ENCODE measurements at regions of chr1 and their contacts with region 1.

Region 1: GRCh38 chr1:67500413-67500959 is 70.3 kb upstream of the SERBP1 start:
- DNase-seq: peak; percentile 15
- H3K4me3 ChIP-seq: no peak overlapping the region
- H3K27me3 ChIP-seq: peaks cover 7% of the 10 kb centered on the region
- CTCF ChIP-seq: peak; percentile 99

Region 2: GRCh38 chr1:67214420-67215174 is 285.9 kb before region 1 on chr1:
- CTCF ChIA-PET with region 1: interaction called, 69 read pairs
- POLR2A ChIA-PET with region 1: no interaction called
- DNase-seq: no peak
- H3K4me3 ChIP-seq: no peak overlapping the region
- H3K27me3 ChIP-seq: no peaks in the 10 kb centered on the region
- CTCF ChIP-seq: peak; percentile 66

Region 3: GRCh38 chr1:67250051-67250653 is 250.3 kb before region 1 on chr1:
- CTCF ChIA-PET with region 1: no interaction called
- POLR2A ChIA-PET with region 1: no interaction called
- DNase-seq: no peak
- H3K4me3 ChIP-seq: no peak overlapping the region
- H3K27me3 ChIP-seq: no peaks in the 10 kb centered on the region
- CTCF ChIP-seq: no peak

Region 4: GRCh38 chr1:67298762-67299161 is 201.7 kb before region 1 on chr1:
- CTCF ChIA-PET with region 1: no interaction called
- POLR2A ChIA-PET with region 1: no interaction called
- DNase-seq: no peak
- H3K4me3 ChIP-seq: no peak overlapping the region
- H3K27me3 ChIP-seq: no peaks in the 10 kb centered on the region; the same call in 1 of the 2 replicates
- CTCF ChIP-seq: no peak

Region 5: GRCh38 chr1:67347688-67348472 is 152.6 kb before region 1 on chr1:
- CTCF ChIA-PET with region 1: interaction called, 173 read pairs
- POLR2A ChIA-PET with region 1: no interaction called
- DNase-seq: peak; percentile 61
- H3K4me3 ChIP-seq: no peak overlapping the region
- H3K27me3 ChIP-seq: no peaks in the 10 kb centered on the region
- CTCF ChIP-seq: peak; percentile 84

Region 6: DNA sequence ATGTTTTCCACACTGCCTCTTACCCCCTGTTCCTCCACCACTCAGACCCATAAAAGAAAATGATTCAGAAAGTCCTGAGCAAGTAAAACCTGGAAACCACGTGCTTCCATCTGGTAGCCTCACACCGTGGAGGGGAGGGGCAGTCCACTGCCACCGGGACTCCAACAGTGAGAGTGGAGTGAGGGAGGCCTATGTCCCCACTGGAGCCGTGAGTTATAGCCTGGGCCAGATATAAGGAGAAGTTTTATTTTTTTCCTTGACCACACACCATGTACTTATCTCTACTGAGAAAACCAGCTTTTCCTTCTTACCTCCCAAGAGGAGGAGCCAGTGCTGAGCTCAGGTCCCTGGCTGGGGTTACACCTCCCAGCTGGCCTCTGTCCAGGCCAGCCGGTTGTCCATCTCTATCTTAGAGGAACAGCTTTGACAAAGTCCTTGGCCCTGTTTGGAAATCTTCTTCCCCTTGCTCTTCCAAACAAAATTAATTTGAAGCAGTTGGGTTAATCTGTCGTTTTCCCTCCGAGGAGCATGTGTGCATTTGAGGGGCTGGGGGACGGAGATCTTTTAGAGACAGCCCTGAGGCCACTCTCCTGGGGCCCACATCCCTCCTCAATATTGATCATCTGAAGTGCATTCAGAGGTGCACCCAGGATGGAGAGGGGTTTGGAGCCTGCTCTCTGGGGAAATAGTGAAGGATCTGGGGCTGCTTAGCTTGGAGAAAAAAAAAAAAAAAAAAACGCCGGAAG is 21.2 kb before region 1 on chr1:
- CTCF ChIA-PET with region 1: interaction called, 13 read pairs
- POLR2A ChIA-PET with region 1: no interaction called
- DNase-seq: no peak
- H3K4me3 ChIP-seq: no peak overlapping the region
- H3K27me3 ChIP-seq: peaks cover 2% of the 10 kb centered on the region
- CTCF ChIP-seq: no peak

Region 7: GRCh38 chr1:67515324-67516080 is 15.0 kb after region 1 on chr1:
- CTCF ChIA-PET with region 1: interaction called, 13 read pairs
- POLR2A ChIA-PET with region 1: no interaction called
- DNase-seq: no peak
- H3K4me3 ChIP-seq: no peak overlapping the region
- H3K27me3 ChIP-seq: no peaks in the 10 kb centered on the region; the same call in 1 of the 2 replicates
- CTCF ChIP-seq: no peak

Region 8: GRCh38 chr1:67614511-67614934 is 114.0 kb after region 1 on chr1:
- CTCF ChIA-PET with region 1: no interaction called
- POLR2A ChIA-PET with region 1: no interaction called
- DNase-seq: no peak
- H3K4me3 ChIP-seq: no peak overlapping the region
- H3K27me3 ChIP-seq: no peaks in the 10 kb centered on the region
- CTCF ChIP-seq: no peak

Measured in BJ (cell line).